ENCODE measurements at regions of chr19 and their contacts with region 1.

Region 1: DNA sequence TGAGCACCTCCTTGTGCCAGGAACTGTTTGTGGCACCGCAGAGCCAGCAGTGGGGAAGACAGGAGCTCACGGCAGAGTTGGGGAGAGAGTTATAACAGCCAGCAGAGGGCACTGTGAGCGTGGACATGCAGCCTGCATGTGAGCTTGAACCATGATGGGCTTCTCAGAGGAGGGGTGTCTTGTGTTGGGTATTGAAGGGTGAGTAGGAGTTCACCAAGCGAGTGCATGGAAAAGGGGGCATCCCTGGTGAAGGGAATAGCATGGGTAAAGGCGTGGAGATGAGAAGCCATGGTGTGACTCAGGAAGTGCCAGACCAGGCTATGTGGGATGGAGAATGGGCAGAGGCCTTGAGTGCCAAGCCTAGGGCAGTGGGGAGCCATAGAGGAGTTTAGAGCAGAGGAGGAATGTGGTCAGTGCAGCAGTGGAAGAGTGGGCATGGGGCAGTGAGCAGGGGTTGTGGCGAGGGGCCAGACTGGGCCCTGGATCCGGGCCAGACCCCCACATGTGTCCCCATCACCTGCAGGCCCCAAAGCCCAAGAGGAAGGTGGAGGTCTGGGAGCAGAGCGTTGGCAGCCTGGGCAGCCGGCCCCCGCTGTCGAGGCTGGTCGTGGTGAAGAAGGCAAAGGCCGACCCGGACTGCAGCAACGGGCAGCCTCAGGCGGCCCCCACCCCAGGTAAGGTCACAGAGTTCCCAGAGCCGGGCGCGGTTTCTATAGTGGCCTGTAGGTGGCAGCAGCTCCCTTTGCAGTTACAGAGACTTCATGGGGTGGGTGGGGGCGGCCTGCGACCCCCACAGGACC is 11.8 kb upstream of the SHD start:
- DNase-seq: peak; percentile 72 to 79 (median 74)
- ATAC-seq: peak; percentile 70
- H3K4me3 ChIP-seq: no peak overlapping the region
- H3K4me1 ChIP-seq: peaks cover 14% of the 10 kb centered on the region
- CTCF ChIP-seq: peak; percentile 76

Region 2: DNA sequence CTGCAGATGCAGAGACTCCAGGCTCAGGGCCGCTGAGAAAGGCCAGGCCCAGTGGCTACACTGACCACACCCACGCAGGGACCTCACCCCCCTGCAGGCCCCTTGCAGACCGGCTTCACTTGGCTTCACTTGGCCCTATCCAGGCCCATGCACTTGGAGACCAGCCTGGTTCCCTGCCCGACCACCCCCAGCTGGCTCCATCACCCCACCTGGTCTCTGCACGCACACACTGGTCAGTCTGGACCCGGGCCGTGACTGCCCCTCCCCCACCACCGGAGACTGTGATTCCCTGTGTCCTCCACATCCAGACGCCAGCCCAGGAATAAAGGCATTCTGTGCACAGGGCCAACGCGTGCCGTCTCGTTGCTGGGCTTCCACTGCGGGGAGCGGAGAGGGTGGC is 42.8 kb before region 1 on chr19:
- intact Hi-C with region 1: no loop called
- DNase-seq: no peak
- ATAC-seq: no peak
- H3K4me3 ChIP-seq: no peak overlapping the region
- H3K4me1 ChIP-seq: no peaks in the 10 kb centered on the region
- CTCF ChIP-seq: no peak

Region 3: DNA sequence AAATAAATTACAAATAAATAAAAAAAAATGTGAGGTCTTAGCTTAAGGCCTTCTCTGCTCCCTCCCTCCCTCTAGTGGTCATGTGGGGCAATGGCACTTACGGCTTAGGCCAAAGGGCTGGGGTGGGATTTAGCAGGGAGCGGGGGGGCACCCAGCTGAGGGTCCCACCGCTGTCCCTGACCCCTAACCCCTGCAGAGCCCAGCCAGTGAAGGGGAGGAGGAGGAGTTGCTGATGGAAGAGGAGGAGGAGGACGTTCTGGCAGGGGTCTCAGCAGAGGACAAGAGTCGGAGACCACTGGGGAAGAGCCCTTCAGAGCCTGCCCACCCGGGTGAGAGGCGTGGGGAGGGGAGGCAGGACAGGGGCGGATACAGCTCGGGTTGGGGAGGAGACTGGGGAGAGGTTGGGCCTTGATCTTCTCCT is 85.4 kb after region 1 on chr19:
- intact Hi-C with region 1: loop called (anchors 5 to 10 kb)
- DNase-seq: peak in 1 of 3 donors; percentile 53
- ATAC-seq: peak; percentile 76
- H3K4me3 ChIP-seq: no peak overlapping the region
- H3K4me1 ChIP-seq: no peaks in the 10 kb centered on the region
- CTCF ChIP-seq: peak; percentile 79

Measured in mucosa of descending colon (tissue), 3 donors.